GM12878 (cell line): ENCODE measurements at regions of chr16 and their contacts with region 1.

Region 1: DNA sequence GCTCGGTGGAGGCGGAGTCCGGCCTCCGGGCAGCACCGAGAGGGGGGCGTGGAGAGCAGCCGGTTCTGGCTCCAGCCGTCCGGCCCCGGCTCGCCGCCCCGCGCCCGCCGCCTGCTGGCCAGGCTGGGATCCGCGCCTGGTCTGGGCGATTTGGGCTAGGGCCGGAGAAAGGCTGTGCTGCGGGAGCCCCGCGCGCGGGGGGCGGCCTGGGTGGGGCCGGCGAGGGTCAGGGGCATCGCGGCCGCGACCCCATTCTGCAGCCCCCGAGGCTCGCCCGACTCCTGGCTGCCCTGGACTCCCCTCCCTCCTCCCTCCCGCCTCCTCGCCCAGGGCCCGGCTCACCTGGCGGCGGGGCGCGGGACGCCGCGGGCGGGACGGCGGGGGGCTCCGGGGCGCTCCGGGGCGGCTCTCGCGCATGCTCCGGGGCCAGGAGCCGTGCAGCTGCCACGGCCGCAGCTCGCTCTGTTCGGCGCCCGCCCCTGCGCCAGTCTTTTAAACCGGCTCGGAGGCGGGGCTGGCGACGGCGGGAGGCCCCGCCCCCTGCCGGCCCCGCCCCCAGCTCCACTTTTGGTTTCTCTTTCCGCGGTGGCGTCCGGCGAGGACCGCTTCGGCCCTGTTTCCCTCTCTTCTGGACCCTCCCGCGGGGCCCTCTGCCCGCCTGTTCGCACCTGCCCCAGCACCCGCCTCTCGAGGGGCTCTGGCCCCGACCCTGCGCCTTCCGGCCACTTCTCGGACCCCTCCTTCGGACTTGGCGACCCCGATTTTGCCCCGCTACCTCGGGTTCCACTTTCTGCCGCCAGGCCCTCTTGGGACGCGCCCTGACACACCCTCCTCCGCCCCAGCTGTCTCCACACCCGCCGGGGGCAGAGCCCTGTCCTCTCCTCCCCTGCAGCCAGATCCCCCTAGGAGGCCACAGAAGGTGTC is at the start of gene SOCS1:
- DNase-seq: no peak
- ATAC-seq: peak; percentile 60
- H3K4me3 ChIP-seq: peak within 1 kb of the TSS; percentile 91
- H3K27ac ChIP-seq: peak within 1 kb of the TSS; percentile 91
- H3K4me1 ChIP-seq: peaks cover 43% of the 10 kb centered on the region
- H3K27me3 ChIP-seq: no peaks in the 10 kb centered on the region
- CTCF ChIP-seq: peak; percentile 72 to 79 (median 76); a peak in 5 of 6 replicates
- EP300 ChIP-seq: 0 out of 4 replicates have a peak, but pooled peaks of 1 of the 2 experiments have one; percentile 7
- POLR2A ChIP-seq: peak; percentile 92
- RAD21 ChIP-seq: peak; percentile 68
- polyA plus RNA-seq, gene SOCS1: 0.42 to 1.2 TPM

Region 2: DNA sequence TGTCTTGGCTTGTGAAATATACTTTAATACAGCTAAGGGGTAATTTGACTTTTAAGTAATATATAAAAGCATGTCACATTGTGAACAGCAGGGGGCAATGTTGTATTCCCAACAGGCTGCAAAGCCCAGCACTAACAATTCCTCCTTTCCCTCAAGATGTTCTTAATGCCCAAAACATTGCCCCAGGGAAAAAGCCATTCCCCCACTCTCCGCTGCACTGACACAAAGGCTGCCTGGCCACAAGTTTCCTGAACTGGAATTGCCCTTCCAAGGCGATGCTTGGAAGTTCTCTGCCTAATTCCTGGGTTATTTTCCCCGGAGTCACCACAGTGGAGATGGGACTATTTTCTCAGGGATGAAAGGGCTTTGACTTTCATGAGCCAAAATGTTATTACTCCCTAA is 284.4 kb before region 1 on chr16:
- CTCF ChIA-PET with region 1: interaction called, 78 read pairs
- POLR2A ChIA-PET with region 1: interaction called, 47 read pairs
- RAD21 ChIA-PET with region 1: interaction called, 91 read pairs
- SMC1A ChIA-PET with region 1: interaction called, 54 read pairs
- in situ Hi-C with region 1: loop called (anchors 5 kb)
- intact Hi-C with region 1: no loop called
- DNase-seq: no peak
- ATAC-seq: peak; percentile 68
- H3K4me3 ChIP-seq: no peak overlapping the region
- H3K27ac ChIP-seq: no peak overlapping the region
- H3K4me1 ChIP-seq: peaks cover 4% of the 10 kb centered on the region
- H3K27me3 ChIP-seq: no peaks in the 10 kb centered on the region
- CTCF ChIP-seq: peak; percentile 48 to 83 (median 68)
- EP300 ChIP-seq: no peak
- POLR2A ChIP-seq: no peak
- RAD21 ChIP-seq: peak; percentile 82

Region 3: DNA sequence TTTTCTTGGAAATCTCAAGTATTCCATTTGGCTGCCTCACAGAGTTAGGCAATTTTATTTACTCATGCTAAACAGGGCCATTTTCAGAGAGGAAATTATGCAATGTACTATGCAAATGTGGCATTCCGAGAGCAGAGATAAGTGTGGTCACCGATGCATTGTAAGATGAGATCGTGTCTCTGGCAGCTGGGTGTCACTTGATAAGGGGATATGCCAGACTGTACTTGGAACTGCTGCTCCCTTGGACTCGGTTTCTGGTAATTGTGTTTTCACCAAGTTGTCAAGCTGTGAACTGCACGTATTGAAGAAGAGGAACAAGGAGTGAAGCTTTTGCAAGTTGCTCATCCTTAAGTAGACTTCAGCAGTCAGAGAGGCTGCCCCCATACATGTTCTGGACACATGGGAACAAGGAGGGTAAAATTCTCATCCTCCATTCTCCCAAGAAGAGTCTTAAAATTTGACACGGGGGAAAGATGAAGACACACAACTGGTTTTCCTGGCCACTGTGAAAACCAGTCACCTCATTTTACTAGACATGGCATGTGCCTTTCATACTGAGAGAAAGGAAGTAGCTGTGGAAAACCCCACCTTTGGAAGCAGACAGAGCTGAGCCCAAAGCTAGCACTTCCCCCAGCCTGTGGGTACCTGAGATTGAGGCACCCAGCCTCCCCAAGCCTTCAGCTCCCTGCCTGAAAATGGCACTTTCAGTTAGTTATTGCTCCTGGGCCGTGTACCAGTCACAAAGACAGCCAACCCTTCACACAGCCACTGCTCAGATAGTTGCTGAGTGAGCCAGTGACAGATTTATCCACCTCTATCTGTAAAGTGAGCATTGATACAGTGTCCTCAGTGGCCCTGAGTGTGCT is 150.7 kb before region 1 on chr16:
- CTCF ChIA-PET with region 1: interaction called, 12 read pairs
- POLR2A ChIA-PET with region 1: interaction called, 7 read pairs
- RAD21 ChIA-PET with region 1: interaction called, 24 read pairs
- SMC1A ChIA-PET with region 1: interaction called, 7 read pairs
- in situ Hi-C with region 1: no loop called
- intact Hi-C with region 1: loop called (anchors 5 kb)
- DNase-seq: peak; percentile 86
- ATAC-seq: peak; percentile 85
- H3K4me3 ChIP-seq: 0 out of 2 replicates have a peak overlapping the region, but pooled peaks have one; percentile 31
- H3K27ac ChIP-seq: peak overlapping the region; percentile 87
- H3K4me1 ChIP-seq: peaks cover 38% of the 10 kb centered on the region
- H3K27me3 ChIP-seq: no peaks in the 10 kb centered on the region
- CTCF ChIP-seq: no peak
- EP300 ChIP-seq: peak in 1 of 2 experiments; percentile 46; a peak in 1 of 4 replicates
- POLR2A ChIP-seq: peak; percentile 69
- RAD21 ChIP-seq: no peak

Region 4: DNA sequence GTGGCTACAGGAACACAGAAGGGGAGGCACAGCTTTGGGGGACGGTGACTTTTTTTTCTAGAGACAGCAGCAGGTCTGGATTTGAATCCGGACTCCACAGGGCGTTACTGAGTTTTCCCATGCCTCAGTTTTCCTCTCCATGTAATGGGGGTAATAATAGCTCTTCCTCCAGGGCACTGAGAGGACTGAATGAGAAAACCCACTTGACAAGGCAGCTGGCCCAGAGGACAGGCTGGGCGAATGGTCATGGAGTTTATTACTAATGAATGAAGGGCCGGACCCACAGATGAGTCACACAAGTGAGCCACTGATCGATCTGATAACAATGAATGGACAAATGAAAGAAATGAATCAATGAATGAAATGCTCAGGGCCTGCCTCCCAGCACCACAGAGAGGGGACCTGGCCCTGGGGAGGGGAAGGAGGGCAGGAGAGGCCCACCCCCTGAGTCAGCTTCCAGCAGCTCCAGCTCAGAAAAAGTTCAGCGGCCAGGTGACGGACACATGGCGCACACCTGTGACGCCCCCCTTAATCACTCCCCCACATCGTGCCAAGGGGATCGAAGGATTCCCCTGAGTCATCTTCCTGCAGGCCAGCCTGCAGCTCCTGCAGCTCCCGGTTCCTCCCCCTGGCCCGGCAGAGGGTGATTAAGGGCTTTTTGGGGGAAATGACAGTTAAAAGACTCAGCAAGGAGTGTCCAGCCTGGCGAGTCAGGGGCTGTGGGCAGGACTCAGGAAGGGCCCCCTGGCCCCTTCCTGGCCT is 54.3 kb before region 1 on chr16:
- CTCF ChIA-PET with region 1: interaction called, 24 read pairs
- POLR2A ChIA-PET with region 1: interaction called, 21 read pairs
- RAD21 ChIA-PET with region 1: interaction called, 65 read pairs
- SMC1A ChIA-PET with region 1: interaction called, 32 read pairs
- in situ Hi-C with region 1: no loop called
- intact Hi-C with region 1: loop called (anchors 2 kb)
- DNase-seq: no peak
- ATAC-seq: peak; percentile 5
- H3K4me3 ChIP-seq: no peak overlapping the region
- H3K27ac ChIP-seq: peak overlapping the region; percentile 45
- H3K4me1 ChIP-seq: peaks cover 67% of the 10 kb centered on the region
- H3K27me3 ChIP-seq: no peaks in the 10 kb centered on the region
- CTCF ChIP-seq: no peak
- EP300 ChIP-seq: peak in 1 of 2 experiments; percentile 28; a peak in 1 of 4 replicates
- POLR2A ChIP-seq: no peak
- RAD21 ChIP-seq: no peak

Region 5: GRCh38 chr16:11283820-11284248 is 27.8 kb after region 1 on chr16:
- CTCF ChIA-PET with region 1: interaction called, 5 read pairs
- POLR2A ChIA-PET with region 1: interaction called, 8 read pairs
- RAD21 ChIA-PET with region 1: interaction called, 12 read pairs
- SMC1A ChIA-PET with region 1: interaction called, 6 read pairs
- in situ Hi-C with region 1: no loop called
- intact Hi-C with region 1: no loop called
- DNase-seq: no peak
- ATAC-seq: no peak
- H3K4me3 ChIP-seq: no peak overlapping the region
- H3K27ac ChIP-seq: no peak overlapping the region
- H3K4me1 ChIP-seq: peaks cover 10% of the 10 kb centered on the region
- H3K27me3 ChIP-seq: no peaks in the 10 kb centered on the region
- CTCF ChIP-seq: no peak
- EP300 ChIP-seq: no peak
- POLR2A ChIP-seq: no peak
- RAD21 ChIP-seq: no peak

Region 6: DNA sequence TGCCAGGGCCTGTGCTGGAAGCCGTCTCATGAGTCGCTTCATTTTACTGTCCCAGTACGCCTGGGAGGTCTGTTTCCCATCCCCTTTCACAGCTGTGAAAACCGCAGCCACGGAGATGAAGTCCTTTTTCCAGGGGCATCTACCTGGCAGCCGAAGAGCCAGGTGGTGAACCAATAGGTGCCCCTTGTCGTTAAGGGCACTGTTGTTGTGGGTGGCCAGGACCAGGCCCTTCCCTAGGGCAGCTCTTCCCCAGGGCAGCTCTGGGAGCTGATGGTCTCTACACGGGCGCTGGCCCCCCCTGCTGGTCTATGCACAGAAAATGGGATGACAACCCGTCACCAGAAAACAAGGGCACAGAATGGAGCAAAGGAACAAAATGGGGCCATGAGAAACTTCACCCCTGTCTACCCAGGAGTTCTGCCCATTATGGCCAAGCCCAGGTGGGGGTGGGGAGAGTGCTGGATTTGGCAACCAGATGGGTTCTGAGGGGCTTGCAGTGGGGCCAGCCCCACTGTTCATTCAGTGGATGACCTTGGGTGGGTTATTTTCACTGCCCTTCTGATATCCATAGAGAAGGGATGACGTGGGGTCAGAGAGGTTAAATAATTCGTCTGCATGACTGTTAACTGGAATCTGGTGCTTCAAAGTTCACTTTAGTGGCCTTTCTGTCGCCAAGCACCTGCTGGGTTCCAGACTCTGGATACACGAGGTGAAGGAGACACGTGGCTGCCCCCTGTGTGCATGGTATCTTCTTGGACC is 100.8 kb after region 1 on chr16:
- CTCF ChIA-PET with region 1: interaction called, 170 read pairs
- POLR2A ChIA-PET with region 1: interaction called, 20 read pairs
- RAD21 ChIA-PET with region 1: interaction called, 243 read pairs
- SMC1A ChIA-PET with region 1: interaction called, 58 read pairs
- in situ Hi-C with region 1: no loop called
- intact Hi-C with region 1: loop called (anchors 1 kb)
- DNase-seq: no peak
- ATAC-seq: peak; percentile 42
- H3K4me3 ChIP-seq: no peak overlapping the region
- H3K27ac ChIP-seq: no peak overlapping the region
- H3K4me1 ChIP-seq: peaks cover 44% of the 10 kb centered on the region
- H3K27me3 ChIP-seq: no peaks in the 10 kb centered on the region
- CTCF ChIP-seq: peak; percentile 70 to 88 (median 74); a peak in 5 of 6 replicates
- EP300 ChIP-seq: no peak
- POLR2A ChIP-seq: no peak
- RAD21 ChIP-seq: peak; percentile 88